Astrocyte of the cerebellum (primary cell): ENCODE measurements at regions of chr3 and their contacts with region 1.

Region 1: DNA sequence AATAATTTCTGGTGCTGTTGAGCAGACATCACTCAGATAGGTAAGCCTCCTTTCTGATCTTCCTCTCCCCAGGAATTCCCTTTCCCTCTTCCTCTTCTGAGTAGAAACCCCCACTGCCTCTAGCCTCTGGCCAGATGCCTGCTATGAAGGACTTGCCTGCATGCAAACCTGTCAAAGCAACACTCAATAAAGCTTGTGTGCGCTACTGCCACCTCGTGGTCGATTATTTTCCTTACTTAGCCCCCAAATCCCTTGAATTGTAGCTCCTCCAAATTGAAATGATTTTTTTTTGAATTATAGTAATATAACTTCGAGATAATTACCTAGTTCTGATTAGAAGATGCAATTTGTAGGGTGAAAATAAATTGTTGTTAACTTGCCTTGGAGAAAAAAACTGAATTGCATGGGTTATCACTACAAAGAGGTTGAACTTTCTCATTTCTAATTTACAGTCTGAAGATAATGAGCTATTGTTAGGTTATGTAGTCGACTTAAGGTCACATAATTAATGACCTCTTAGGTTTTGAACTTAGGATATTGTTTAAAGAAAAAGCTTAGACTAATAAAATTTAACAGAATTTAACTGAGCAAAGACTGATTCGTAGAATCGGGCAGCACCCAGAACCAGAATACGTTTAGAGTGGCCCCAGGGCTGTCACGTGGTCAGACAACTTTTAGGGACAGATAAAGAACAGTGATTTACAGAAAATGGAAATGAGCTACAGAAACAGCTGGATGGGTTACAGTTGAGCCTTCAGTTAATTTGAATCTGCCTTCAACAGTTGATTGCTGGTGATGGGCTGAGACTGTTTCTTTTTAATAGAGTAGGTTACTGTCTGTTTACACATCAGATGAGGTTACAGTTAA is 269.3 kb downstream of the ARPP21 start:
- DNase-seq: peak; percentile 83
- H3K4me3 ChIP-seq: no peak overlapping the region
- CTCF ChIP-seq: peak; percentile 78

Region 2: GRCh38 chr3:34260271-34261006 is 1648.2 kb before region 1 on chr3:
- in situ Hi-C with region 1: loop called (anchors 25 kb)
- DNase-seq: peak; percentile 40
- H3K4me3 ChIP-seq: no peak overlapping the region
- CTCF ChIP-seq: peak; percentile 88

Region 3: DNA sequence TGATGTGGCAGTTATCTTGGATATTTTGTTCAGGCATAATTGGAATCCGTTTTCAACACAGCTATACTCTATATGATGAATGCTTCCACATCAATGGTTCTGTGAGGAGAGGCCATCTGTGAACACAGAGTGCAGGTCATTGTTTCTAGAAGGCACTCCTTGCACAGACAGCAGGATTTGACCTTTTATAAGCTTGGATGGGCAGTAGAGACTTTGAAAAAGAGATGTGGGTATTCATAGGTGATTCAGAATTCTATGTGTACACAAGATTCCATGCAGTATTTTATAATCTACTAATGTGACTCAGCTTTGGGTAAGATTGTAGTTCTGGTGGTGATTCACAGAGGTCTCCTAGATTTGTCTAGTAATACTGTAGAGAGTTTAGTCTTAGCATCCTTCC is 256.7 kb before region 1 on chr3:
- in situ Hi-C with region 1: no loop called
- DNase-seq: no peak
- H3K4me3 ChIP-seq: no peak overlapping the region
- CTCF ChIP-seq: no peak